Activated CD8-positive, alpha-beta T cell treated with anti-CD3 and anti-CD28 coated beads, Interleukin-2, amount 10 ng/mL, durations not matched to agents 7 days and 5 days (primary cell): ENCODE measurements at regions of chr14 and their contacts with region 1.

Region 1: DNA sequence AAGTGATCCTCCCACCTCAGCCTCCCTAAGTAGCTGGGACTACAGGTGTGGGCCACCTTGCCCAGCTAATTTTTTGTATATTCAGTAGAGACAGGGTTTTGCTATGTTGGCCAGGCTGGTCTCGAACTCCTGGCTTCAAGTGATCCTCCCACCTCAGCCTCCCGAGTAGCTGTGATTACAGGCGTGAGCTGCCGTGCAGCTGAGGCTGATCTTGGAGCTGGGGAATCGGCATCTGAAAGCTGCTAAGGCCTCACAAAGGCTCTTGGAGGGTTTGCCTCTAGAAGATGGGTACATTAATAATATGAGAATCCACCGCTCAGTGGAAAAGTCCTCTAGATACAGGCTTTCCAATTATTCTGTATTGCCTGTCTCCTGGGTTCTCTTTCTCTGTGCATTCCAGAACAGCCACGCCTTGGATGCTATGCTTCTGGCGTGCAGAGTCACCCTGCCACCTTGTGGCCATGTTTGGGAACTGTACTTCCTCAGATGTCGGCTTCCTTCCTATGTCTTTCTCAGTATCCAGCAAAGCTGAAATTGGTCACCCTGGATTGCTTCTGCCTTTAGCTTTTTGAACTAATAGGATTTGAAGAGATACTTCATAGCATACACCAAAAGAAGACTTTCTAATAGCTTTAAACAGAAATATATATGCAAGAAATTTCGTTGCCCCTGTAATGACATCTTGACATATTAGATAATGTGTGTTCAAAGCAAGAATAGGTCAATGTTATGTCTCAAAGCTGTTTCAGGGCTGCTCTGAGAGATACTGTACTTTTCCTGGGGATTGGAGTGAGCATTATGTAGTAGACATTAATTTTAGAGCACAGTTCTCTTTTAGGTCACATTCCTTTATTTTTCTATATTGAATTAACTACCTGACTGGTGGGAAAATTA is 75.4 kb downstream of the SNAPC1 start:
- DNase-seq: peak; percentile 84
- ATAC-seq: peak; percentile 96
- H3K4me3 Mint-ChIP-seq: no peak overlapping the region
- H3K27ac Mint-ChIP-seq: no peak overlapping the region
- H3K4me1 Mint-ChIP-seq: peaks cover 9% of the 10 kb centered on the region
- H3K27me3 Mint-ChIP-seq: peaks cover 25% of the 10 kb centered on the region

Region 2: GRCh38 chr14:61269321-61270083 is 568.1 kb before region 1 on chr14:
- CTCF ChIA-PET with region 1: interaction called, 13 read pairs
- POLR2A ChIA-PET with region 1: no interaction called
- DNase-seq: peak; percentile 88
- ATAC-seq: peak; percentile 91
- H3K4me3 Mint-ChIP-seq: peak overlapping the region; percentile 68
- H3K27ac Mint-ChIP-seq: no peak overlapping the region
- H3K4me1 Mint-ChIP-seq: peaks cover 7% of the 10 kb centered on the region
- H3K27me3 Mint-ChIP-seq: peaks cover 52% of the 10 kb centered on the region

Region 3: DNA sequence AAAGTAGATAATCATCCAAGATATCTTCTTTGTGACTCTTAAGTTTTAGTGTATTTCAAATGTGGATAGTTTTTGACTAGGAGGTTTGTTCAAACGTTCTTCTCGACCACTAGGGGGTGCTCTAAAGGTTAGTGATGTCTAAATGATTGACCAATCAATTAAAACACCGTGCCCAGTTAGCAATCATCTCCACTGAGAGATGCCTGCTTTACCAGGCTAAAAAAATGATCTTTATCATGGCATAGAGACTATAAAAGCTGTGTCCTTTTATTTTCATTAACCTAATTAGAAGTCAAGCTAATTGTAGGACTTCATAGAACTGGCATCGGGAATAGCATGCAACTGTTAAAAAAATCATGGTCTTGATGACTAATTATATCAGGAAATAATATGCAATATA is 362.3 kb before region 1 on chr14:
- CTCF ChIA-PET with region 1: interaction called, 72 read pairs
- POLR2A ChIA-PET with region 1: no interaction called
- DNase-seq: no peak
- ATAC-seq: no peak
- H3K4me3 Mint-ChIP-seq: peak overlapping the region; percentile 12
- H3K27ac Mint-ChIP-seq: peak overlapping the region; percentile 84
- H3K4me1 Mint-ChIP-seq: peaks cover 94% of the 10 kb centered on the region
- H3K27me3 Mint-ChIP-seq: no peaks in the 10 kb centered on the region

Region 4: DNA sequence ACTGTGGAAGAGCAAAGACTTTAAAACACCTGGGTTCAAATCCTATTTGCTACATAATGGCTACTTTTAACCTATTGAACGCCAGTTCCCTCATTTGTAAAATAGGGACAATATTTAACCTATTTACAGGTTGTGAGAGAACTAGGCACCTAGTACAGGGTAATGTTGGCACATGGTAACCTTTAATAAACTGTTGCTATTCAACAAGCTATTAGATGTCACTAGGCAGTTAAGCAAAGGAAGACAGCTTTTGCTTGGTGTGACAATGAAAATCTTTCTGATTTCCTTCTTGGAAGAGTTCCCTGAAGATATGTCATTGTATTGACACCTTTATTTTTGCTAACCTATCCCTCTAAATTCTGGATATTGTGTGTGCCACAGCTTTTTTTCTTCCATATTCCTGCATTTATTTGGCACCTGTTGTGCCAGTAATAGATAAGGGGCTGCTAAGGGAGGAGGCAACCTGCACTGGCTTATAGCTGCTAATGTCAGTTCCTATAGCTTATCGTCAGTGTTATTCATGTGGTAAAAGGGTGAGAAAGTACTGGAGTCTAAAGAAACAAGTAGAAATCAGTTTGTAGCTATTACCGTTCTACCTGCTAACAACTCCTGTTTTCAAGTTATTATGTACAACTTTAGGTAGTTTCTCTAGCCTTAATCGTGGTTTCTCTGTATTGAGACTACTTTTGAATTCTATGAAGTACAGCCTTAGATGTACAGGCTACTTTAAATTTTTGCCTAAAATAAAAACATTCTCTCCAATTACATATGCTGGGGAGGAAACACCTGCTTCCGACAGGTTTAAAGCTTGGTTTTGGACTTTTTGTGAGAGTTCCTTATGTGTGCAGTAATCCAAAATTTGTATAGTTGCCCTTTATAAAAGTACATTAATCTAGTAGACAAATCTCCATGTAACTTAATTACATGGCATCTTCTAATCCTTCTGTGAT is 118.0 kb before region 1 on chr14:
- CTCF ChIA-PET with region 1: interaction called, 14 read pairs
- POLR2A ChIA-PET with region 1: no interaction called
- DNase-seq: no peak
- ATAC-seq: peak; percentile 72
- H3K4me3 Mint-ChIP-seq: peak overlapping the region; percentile 20
- H3K27ac Mint-ChIP-seq: peak overlapping the region; percentile 56
- H3K4me1 Mint-ChIP-seq: peaks cover 69% of the 10 kb centered on the region
- H3K27me3 Mint-ChIP-seq: no peaks in the 10 kb centered on the region

Region 5: DNA sequence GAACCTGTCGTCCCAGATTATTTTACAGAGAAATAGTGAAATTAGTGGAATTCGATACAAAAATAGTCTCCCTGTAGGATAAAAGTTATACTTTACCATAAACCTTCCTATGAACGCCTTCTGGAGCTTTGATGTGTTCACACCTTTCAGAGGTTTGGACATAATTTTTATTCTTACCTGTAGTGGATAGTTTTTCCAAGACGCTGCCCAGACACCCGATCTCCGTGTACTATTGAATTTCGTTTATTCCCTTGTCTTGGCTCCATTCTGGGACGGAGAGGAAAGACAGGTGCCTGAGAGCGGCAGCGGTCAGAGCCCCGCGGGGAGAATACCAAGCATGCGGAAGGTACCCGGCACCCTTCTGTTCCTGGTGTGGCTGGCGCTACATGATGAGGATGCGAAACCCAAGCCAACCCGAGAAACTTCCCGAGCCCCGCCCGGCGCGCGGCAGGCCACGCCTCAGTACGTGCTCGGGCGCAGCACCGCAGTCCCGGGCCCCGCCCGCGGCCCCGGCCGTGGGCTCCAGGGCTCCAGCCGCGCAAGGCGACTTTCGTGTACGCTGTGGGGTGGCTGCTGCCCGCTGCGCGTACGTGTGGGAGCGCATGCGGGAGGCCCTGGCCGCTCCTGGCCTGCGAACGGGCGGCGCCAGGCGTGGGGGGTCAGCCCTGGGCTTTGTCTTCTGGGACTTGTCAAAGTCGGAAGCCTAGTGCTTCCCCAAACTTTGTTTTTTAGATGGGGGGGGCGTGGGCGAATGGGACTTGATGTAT is 86.7 kb before region 1 on chr14:
- CTCF ChIA-PET with region 1: interaction called, 62 read pairs
- POLR2A ChIA-PET with region 1: no interaction called
- DNase-seq: peak; percentile 89
- ATAC-seq: peak; percentile 98
- H3K4me3 Mint-ChIP-seq: peak overlapping the region; percentile 86
- H3K27ac Mint-ChIP-seq: peak overlapping the region; percentile 83
- H3K4me1 Mint-ChIP-seq: peaks cover 56% of the 10 kb centered on the region
- H3K27me3 Mint-ChIP-seq: no peaks in the 10 kb centered on the region

Region 6: DNA sequence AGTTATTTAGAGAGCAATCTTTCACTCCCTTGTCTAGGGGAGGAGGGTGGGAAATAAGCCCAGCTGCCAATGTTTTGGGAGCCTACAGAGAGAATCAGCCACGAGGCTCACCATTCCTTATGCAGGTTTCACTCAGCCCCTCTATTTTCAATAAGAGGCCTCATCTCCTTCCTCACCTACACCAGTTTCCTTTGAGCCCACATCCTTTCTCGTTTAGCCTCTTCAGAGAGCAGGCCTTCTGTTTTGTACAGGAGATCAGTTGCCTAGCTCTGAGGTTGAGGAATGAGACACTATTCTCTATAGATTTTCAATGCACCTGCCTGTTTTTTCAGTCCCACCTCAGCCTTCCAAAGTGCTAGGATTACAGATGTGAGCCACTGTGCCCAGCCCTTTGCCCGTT is 57.5 kb before region 1 on chr14:
- CTCF ChIA-PET with region 1: interaction called, 12 read pairs
- POLR2A ChIA-PET with region 1: no interaction called
- DNase-seq: peak; percentile 48
- ATAC-seq: peak; percentile 94
- H3K4me3 Mint-ChIP-seq: peak overlapping the region; percentile 54
- H3K27ac Mint-ChIP-seq: peak overlapping the region; percentile 93
- H3K4me1 Mint-ChIP-seq: peaks cover 32% of the 10 kb centered on the region
- H3K27me3 Mint-ChIP-seq: no peaks in the 10 kb centered on the region

Region 7: DNA sequence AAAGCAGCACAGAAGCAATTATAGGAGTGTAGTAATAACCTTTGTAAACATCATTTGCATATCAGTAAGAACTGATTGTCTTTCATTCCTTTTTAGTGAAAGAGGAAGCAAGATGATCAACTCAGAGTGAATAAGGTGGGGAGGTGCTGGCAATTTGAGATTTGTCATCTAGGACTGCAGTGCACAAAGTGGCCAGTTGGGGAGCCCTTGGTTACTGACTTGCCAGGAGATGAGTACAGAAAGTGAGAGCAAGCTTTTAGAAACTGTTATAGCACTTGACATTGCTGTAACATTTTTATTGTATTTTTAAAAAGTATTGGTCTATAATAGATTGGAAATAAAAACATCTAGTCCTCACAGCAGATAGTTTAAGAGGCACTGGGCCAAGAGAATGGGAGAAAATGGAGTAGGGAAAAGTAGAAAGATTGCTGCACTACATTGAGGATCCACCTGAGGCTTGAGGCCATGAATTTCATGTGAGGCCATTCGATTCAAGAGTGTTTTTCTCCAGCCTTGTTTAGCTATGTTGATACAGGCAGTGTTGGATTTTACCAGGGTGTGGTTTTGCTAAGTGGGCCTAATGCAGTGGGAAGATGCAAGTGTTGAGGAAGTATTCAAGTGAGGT is 22.8 kb after region 1 on chr14:
- CTCF ChIA-PET with region 1: interaction called, 15 read pairs
- POLR2A ChIA-PET with region 1: no interaction called
- DNase-seq: peak; percentile 78
- ATAC-seq: peak; percentile 92
- H3K4me3 Mint-ChIP-seq: no peak overlapping the region
- H3K27ac Mint-ChIP-seq: no peak overlapping the region
- H3K4me1 Mint-ChIP-seq: no peaks in the 10 kb centered on the region
- H3K27me3 Mint-ChIP-seq: peaks cover 26% of the 10 kb centered on the region

Region 8: GRCh38 chr14:62491146-62491545 is 653.6 kb after region 1 on chr14:
- CTCF ChIA-PET with region 1: no interaction called
- POLR2A ChIA-PET with region 1: no interaction called
- DNase-seq: no peak
- ATAC-seq: no peak
- H3K4me3 Mint-ChIP-seq: no peak overlapping the region
- H3K27ac Mint-ChIP-seq: no peak overlapping the region
- H3K4me1 Mint-ChIP-seq: no peaks in the 10 kb centered on the region
- H3K27me3 Mint-ChIP-seq: no peaks in the 10 kb centered on the region